Left colon (tissue), 2 donors: ENCODE measurements at regions of chr3 and their contacts with region 1.

Region 1: GRCh38 chr3:126197854-126198584 is 17.6 kb upstream of the ALDH1L1 start:
- DNase-seq: peak; percentile 52 to 70
- ATAC-seq: peak; percentile 85

Region 2: GRCh38 chr3:126134219-126134975 is 63.6 kb before region 1 on chr3:
- intact Hi-C with region 1: loop called in 1 of 2 experiments (anchors 10 kb)
- DNase-seq: peak; percentile 31 to 67
- ATAC-seq: peak; percentile 74

Region 3: GRCh38 chr3:126304704-126305103 is 106.7 kb after region 1 on chr3:
- intact Hi-C with region 1: no loop called
- DNase-seq: no peak
- ATAC-seq: no peak

Region 4: GRCh38 chr3:126508539-126508938 is 310.5 kb after region 1 on chr3:
- intact Hi-C with region 1: no loop called
- DNase-seq: no peak
- ATAC-seq: no peak